ENCODE measurements at regions of chr2 and their contacts with region 1.

Region 1: GRCh38 chr2:135820003-135820618 is 16.9 kb downstream of the LCT start:
- DNase-seq: peak; percentile 93
- H3K4me3 Mint-ChIP-seq: peak overlapping the region; percentile 74
- H3K27ac Mint-ChIP-seq: peak overlapping the region; percentile 83
- H3K4me1 Mint-ChIP-seq: peaks cover 44% of the 10 kb centered on the region
- H3K27me3 Mint-ChIP-seq: no peaks in the 10 kb centered on the region

Region 2: DNA sequence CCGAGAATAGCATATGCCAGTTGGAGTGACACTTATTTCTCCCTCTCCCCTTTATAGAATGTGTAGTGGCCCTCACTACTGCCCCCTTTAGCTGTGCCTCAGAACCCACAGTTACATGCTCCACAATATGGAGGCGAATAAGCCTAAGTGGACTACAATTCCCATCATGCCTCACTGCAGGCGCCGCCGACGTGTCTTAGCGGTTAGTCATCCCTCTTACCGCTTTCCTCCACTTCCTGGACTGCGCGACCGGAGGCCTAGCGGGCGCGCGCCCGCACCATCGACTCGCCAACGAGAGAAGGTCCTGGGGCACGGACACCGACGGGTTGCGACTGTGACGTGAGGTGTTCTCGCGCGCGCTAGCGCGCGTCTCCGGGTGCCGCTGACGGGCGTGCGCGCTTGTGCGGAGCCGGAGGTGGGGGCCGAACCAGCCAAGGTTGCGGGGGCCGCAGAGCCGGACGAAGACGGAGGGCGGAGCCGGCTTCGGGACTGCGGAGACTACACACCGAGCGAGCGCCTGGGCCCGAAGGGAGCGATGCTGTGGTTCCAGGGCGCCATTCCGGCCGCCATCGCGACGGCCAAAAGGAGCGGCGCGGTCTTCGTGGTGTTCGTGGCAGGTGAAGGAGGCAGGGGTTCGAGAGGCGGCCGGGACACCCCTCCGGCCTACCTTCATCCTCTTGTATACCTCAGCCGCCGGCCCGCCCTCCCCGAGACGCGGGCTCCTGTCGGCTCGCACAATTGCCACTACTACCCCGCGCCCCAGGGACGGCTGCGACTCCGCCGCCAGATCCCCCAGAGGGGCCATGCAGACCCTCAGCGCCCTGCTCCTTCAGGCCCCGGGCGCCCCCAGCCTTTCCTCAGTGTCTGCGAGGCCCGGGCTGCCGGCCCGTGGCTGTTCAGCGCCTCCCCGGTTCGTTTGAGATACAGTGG is 78.5 kb before region 1 on chr2 and contains the start of gene UBXN4:
- intact Hi-C with region 1: loop called (anchors 1 kb)
- DNase-seq: peak; percentile 96
- H3K4me3 Mint-ChIP-seq: peak within 1 kb of the TSS; percentile 99
- H3K27ac Mint-ChIP-seq: peak within 1 kb of the TSS; percentile 100
- H3K4me1 Mint-ChIP-seq: peaks cover 36% of the 10 kb centered on the region
- H3K27me3 Mint-ChIP-seq: no peaks in the 10 kb centered on the region
- total RNA-seq, gene UBXN4: 116 and 127 TPM in 2 replicates

Region 3: GRCh38 chr2:135797497-135798274 is 22.4 kb before region 1 on chr2:
- intact Hi-C with region 1: loop called (anchors 1 kb)
- DNase-seq: peak; percentile 92
- H3K4me3 Mint-ChIP-seq: no peak overlapping the region
- H3K27ac Mint-ChIP-seq: peak overlapping the region; percentile 34
- H3K4me1 Mint-ChIP-seq: peaks cover 15% of the 10 kb centered on the region
- H3K27me3 Mint-ChIP-seq: no peaks in the 10 kb centered on the region

Region 4: DNA sequence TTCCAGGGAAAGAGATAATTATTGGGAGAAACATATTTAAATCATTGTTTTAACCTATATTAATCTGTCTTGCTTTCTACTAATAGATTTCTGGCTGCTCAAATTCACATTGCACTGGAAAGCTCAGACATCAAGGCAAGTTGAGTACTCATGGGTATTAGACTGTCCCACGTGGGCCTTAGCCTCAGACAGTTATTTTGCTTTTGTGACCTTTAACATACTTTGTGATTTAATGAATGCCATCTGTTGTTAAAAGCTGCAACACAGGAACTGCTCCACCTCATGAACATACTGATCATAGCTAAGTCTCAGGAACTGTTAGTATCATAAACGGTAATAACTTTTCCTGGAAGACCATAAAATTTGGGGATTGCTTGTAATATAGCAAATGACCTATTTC is 19.6 kb after region 1 on chr2:
- intact Hi-C with region 1: loop called (anchors 1 kb)
- DNase-seq: no peak
- H3K4me3 Mint-ChIP-seq: no peak overlapping the region
- H3K27ac Mint-ChIP-seq: no peak overlapping the region
- H3K4me1 Mint-ChIP-seq: peaks cover 23% of the 10 kb centered on the region
- H3K27me3 Mint-ChIP-seq: no peaks in the 10 kb centered on the region

Region 5: DNA sequence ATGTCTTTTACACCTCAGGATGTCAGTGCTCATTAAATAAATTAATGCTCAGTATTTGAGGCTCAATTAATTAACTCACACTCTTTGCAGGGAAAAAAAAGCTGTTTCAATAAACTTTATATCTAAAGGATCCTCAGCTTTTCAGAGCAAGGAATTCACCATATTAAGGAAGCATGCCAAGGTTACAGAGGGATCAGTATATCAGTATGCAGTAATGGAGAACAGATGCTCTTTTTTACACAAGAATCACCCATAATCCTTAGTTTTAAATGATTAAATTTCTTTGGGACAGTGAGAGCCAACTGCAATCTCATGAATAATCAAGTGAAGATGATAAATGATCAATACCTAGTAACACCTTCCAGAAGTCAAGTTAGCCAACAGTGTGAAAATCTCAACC is 31.7 kb after region 1 on chr2:
- intact Hi-C with region 1: no loop called
- DNase-seq: no peak
- H3K4me3 Mint-ChIP-seq: no peak overlapping the region
- H3K27ac Mint-ChIP-seq: no peak overlapping the region
- H3K4me1 Mint-ChIP-seq: peaks cover 11% of the 10 kb centered on the region
- H3K27me3 Mint-ChIP-seq: no peaks in the 10 kb centered on the region

Region 6: GRCh38 chr2:135876066-135876711 is 56.1 kb after region 1 on chr2 and contains the start of gene MCM6:
- intact Hi-C with region 1: loop called (anchors 1 kb)
- DNase-seq: peak; percentile 100
- H3K4me3 Mint-ChIP-seq: peak within 1 kb of the TSS; percentile 83
- H3K27ac Mint-ChIP-seq: peak within 1 kb of the TSS; percentile 97
- H3K4me1 Mint-ChIP-seq: peaks cover 31% of the 10 kb centered on the region
- H3K27me3 Mint-ChIP-seq: peaks cover 2% of the 10 kb centered on the region
- total RNA-seq, gene MCM6: 196 and 197 TPM in 2 replicates

Measured in activated CD4-positive, alpha-beta T cell treated with anti-CD3 and anti-CD28 coated beads, Interleukin-2, amount 10 ng/mL, durations not matched to agents 24 days and 14 days (primary cell).